Endothelial cell of umbilical vein (primary cell): ENCODE measurements at regions of chr3 and their contacts with region 1.

Region 1: DNA sequence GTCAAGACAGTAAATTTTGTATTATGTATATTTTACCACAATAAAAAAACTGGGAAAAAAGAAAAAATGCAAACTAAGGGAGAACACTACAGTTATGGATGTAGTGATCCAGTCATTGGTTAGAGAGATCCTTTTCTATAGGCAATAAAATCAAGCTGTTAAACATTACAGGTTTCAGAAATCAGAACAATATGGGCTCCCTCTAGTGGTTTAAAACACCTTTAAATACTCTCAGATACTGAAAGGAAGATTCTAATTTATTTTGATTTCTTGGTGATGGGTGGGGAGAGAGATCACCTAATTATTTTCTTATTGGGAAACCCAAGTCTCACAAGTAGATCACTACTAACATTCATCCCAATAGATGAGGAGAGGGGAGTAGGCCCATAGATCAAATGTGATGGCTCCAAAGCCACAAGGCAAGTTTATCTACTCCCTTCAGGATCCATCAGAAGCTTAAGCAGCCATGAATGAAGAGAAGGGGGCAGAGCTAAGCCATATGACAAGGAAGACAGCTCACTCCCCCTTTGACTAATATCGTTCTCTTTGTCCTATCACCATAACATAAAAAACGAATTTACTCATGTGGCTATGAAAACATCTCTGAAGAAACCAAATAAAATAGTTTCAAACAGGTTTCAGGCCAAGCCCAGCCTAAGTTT is 118.6 kb downstream of the ANO10 start:
- DNase-seq: peak; percentile 67
- H3K4me3 ChIP-seq: no peak overlapping the region
- H3K27ac ChIP-seq: peak overlapping the region; percentile 58
- H3K4me1 ChIP-seq: peaks cover 39% of the 10 kb centered on the region
- H3K27me3 ChIP-seq: no peaks in the 10 kb centered on the region
- CTCF ChIP-seq: peak; percentile 20 to 33
- POLR2A ChIP-seq: no peak

Region 2: GRCh38 chr3:43286115-43286840 is 216.9 kb before region 1 on chr3 and contains the start of gene SNRK:
- CTCF ChIA-PET with region 1: interaction called, 18 read pairs
- POLR2A ChIA-PET with region 1: interaction called, 5 read pairs
- dilution Hi-C with region 1: no loop called
- intact Hi-C with region 1: loop called (anchors 1 kb)
- DNase-seq: peak; percentile 99
- H3K4me3 ChIP-seq: peak within 1 kb of the TSS; percentile 60 to 100 (median 99)
- H3K27ac ChIP-seq: peak within 1 kb of the TSS; percentile 100
- H3K4me1 ChIP-seq: peaks cover 43% of the 10 kb centered on the region
- H3K27me3 ChIP-seq: no peaks in the 10 kb centered on the region
- CTCF ChIP-seq: peak; percentile 32 to 42
- POLR2A ChIP-seq: peak; percentile 87
- total RNA-seq, gene SNRK: 99.9 and 108 TPM in 2 replicates

Region 3: DNA sequence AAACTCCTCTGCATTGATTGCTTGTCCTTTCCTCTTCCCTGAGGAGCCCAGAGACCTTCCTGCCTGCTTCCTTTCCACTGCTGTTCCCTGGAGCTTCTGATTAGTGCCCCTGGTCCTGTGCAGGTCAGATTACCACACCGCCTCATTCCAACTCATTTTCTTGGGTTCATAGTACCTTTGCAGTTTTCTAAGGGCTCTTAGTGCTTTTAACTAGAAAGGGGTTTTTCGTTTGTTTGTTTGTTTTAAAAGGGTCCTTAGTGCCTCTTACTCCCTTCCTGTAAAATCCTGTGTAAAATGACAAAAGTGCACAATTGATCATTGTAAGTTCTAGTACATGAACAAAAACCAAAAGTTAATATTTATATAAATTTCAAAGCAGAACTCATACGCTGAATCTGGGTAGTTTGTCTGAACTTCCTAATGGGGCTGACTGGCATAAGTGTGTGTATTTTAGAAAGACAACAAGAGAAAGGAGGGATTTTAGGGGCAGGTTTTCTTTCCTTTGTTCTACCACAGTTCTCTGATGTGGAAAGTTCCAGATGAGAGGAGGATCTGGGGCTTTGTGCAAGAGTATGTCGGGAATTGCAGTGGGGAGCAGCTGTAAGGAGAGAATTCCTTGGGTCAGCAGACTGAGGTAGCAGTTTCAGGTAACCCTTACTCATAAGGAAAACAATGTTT is 186.3 kb before region 1 on chr3:
- CTCF ChIA-PET with region 1: interaction called, 18 read pairs
- POLR2A ChIA-PET with region 1: no interaction called
- dilution Hi-C with region 1: no loop called
- intact Hi-C with region 1: no loop called
- DNase-seq: peak; percentile 30
- H3K4me3 ChIP-seq: no peak overlapping the region
- H3K27ac ChIP-seq: peak overlapping the region; percentile 36
- H3K4me1 ChIP-seq: peaks cover 30% of the 10 kb centered on the region
- H3K27me3 ChIP-seq: no peaks in the 10 kb centered on the region
- CTCF ChIP-seq: no peak
- POLR2A ChIP-seq: no peak

Region 4: DNA sequence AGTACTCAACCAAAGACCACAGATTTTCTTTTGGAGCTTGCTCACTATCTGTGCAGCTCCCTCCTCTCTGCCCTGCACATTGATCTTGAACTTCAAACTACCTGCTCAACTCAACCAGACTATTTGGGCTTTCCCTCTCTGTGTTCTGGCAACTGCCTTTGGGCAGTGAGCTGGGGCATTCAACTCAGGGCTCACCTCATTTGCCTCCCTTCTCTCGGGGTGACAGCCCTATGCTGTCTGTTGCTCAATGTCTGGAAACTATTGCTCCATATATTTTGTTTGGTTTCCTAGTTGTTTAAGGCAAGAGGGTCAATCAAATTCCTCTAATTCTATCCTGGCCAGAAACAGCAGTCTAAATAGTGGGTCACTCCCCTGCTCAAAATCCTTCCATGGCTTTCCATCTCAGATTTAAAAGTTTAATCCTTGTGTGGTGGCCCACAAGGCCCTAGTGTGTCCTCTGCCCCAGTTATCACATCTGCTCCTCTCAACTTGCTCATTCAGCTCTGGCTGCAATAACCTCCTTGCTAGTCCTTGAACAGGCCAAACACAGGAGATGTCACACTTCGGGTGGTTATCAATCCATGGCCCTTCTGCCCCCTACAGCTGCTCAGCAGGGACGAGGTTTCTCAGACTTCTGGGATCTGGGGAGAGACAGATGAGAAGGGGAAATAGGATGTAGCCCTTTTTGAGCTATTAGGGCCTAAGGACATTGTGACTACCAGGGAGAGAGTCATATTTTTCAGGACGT is 149.1 kb before region 1 on chr3:
- CTCF ChIA-PET with region 1: interaction called, 29 read pairs
- POLR2A ChIA-PET with region 1: no interaction called
- dilution Hi-C with region 1: no loop called
- intact Hi-C with region 1: no loop called
- DNase-seq: peak; percentile 32
- H3K4me3 ChIP-seq: no peak overlapping the region
- H3K27ac ChIP-seq: no peak overlapping the region
- H3K4me1 ChIP-seq: no peaks in the 10 kb centered on the region
- H3K27me3 ChIP-seq: no peaks in the 10 kb centered on the region
- CTCF ChIP-seq: no peak
- POLR2A ChIP-seq: no peak

Region 5: DNA sequence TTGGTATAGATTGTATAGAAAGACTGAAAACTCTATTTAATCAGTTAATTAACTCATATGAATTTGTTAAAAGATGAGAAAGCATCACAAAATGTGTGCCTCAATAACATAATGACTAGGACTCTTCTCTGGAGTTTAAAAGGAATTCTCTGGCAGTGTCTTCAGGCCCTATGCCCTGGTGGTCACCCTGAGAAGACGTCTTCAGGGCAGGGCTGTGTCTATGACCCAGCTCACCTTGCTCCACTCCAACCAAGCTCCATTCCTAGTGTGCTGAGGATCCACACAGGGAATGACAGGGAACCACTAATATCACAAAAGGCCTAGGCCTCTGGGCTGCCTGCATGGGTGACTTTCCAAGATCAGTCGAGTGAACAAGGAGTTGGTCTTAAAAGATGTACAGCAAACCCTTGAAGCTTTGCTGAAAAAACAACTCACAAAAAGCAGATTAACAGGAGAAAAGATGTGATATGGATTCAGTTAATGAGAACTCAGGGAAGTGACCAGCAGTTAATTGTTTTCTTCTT is 60.3 kb before region 1 on chr3:
- CTCF ChIA-PET with region 1: interaction called, 11 read pairs
- POLR2A ChIA-PET with region 1: no interaction called
- dilution Hi-C with region 1: no loop called
- intact Hi-C with region 1: no loop called
- DNase-seq: no peak
- H3K4me3 ChIP-seq: no peak overlapping the region
- H3K27ac ChIP-seq: no peak overlapping the region
- H3K4me1 ChIP-seq: no peaks in the 10 kb centered on the region
- H3K27me3 ChIP-seq: no peaks in the 10 kb centered on the region
- CTCF ChIP-seq: no peak
- POLR2A ChIP-seq: no peak

Region 6: GRCh38 chr3:43515208-43515917 is 12.2 kb after region 1 on chr3:
- CTCF ChIA-PET with region 1: interaction called, 14 read pairs
- POLR2A ChIA-PET with region 1: no interaction called
- dilution Hi-C with region 1: no loop called
- intact Hi-C with region 1: no loop called
- DNase-seq: no peak
- H3K4me3 ChIP-seq: no peak overlapping the region
- H3K27ac ChIP-seq: no peak overlapping the region
- H3K4me1 ChIP-seq: no peaks in the 10 kb centered on the region
- H3K27me3 ChIP-seq: no peaks in the 10 kb centered on the region
- CTCF ChIP-seq: no peak
- POLR2A ChIP-seq: no peak

Region 7: DNA sequence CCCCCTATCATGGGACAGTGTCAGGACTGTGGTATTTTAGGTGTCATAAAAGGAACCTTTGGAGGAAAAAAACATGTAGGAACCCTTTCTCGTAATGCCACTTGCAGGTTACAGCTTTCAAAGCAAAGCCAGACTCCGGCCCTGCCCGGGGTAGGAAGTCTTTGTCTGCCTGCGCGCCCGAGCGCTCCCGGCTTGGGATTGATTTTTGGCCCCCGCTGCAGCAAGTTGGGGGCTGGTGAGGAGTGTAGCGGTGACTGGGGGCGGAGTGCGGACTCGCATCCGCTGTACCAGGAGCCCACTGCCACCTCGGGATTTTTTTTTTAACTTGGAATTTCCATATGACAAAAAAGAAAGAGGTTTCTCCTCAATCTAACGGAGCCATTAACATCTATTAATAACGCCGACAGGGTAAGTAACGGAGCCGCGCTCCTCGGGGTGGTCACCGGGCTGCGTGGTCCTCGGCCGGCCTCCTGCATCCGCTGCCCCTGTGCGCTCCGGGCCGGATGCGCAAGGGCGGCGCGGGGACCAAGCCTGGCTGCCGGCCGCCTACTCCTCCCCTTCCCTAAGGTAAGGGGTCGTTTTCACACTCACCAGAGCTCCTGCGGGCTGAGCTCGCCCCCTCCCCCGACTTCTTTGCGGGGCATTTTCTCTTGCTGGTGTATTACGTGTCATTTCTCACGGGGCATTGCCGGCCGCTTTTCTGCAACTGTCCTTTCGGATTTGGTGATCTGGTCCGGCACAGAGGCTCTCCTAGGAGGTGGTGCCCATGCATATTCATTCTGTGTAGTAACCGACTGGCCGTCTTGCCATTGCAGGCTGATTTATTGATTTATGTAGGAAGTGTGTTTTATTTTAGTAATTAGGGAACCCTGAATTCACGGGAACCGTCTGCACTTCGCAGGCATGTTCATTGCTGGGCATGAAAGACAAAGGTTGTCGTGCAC is 518.7 kb after region 1 on chr3:
- CTCF ChIA-PET with region 1: no interaction called
- POLR2A ChIA-PET with region 1: no interaction called
- dilution Hi-C with region 1: no loop called
- intact Hi-C with region 1: no loop called
- DNase-seq: no peak
- H3K4me3 ChIP-seq: no peak overlapping the region
- H3K27ac ChIP-seq: no peak overlapping the region
- H3K4me1 ChIP-seq: no peaks in the 10 kb centered on the region
- H3K27me3 ChIP-seq: peaks cover 27 to 46% of the 10 kb centered on the region in 2 experiments
- CTCF ChIP-seq: no peak
- POLR2A ChIP-seq: no peak